Colonic mucosa (tissue), 4 donors: ENCODE measurements at regions of chr9 and their contacts with region 1.

Region 1: GRCh38 chr9:21121595-21122251 is 19.9 kb downstream of the IFNW1 start:
- DNase-seq: no peak
- H3K4me3 ChIP-seq: no peak overlapping the region
- H3K27ac ChIP-seq: no peak overlapping the region
- H3K4me1 ChIP-seq: no peaks in the 10 kb centered on the region
- H3K27me3 ChIP-seq: no peaks in the 10 kb centered on the region
- CTCF ChIP-seq: no peak

Region 2: GRCh38 chr9:19918630-19919029 is 1203.1 kb before region 1 on chr9:
- intact Hi-C with region 1: loop called (anchors 5 kb)
- DNase-seq: no peak
- H3K4me3 ChIP-seq: no peak overlapping the region
- H3K27ac ChIP-seq: no peak overlapping the region
- H3K4me1 ChIP-seq: no peaks in the 10 kb centered on the region
- H3K27me3 ChIP-seq: no peaks in the 10 kb centered on the region
- CTCF ChIP-seq: no peak

Region 3: GRCh38 chr9:20997503-20998076 is 124.1 kb before region 1 on chr9:
- intact Hi-C with region 1: no loop called
- DNase-seq: no peak
- H3K4me3 ChIP-seq: no peak overlapping the region
- H3K27ac ChIP-seq: no peak overlapping the region
- H3K4me1 ChIP-seq: no peaks in the 10 kb centered on the region
- H3K27me3 ChIP-seq: no peaks in the 10 kb centered on the region
- CTCF ChIP-seq: no peak

Region 4: GRCh38 chr9:21070171-21070571 is 51.6 kb before region 1 on chr9:
- intact Hi-C with region 1: no loop called
- DNase-seq: no peak
- H3K4me3 ChIP-seq: no peak overlapping the region
- H3K27ac ChIP-seq: peak overlapping the region; percentile 27
- H3K4me1 ChIP-seq: no peaks in the 10 kb centered on the region
- H3K27me3 ChIP-seq: no peaks in the 10 kb centered on the region
- CTCF ChIP-seq: no peak